Mammary epithelial cell (primary cell): ENCODE measurements at regions of chr2 and their contacts with region 1.

Region 1: GRCh38 chr2:162301151-162301804 is 17.2 kb downstream of the IFIH1 start:
- DNase-seq: peak; percentile 33
- H3K4me3 ChIP-seq: peak overlapping the region in 1 of 3 experiments; percentile 8
- H3K27ac ChIP-seq: no peak overlapping the region
- H3K4me1 ChIP-seq: no peaks in the 10 kb centered on the region
- H3K27me3 ChIP-seq: no peaks in the 10 kb centered on the region
- CTCF ChIP-seq: peak; percentile 72 to 89

Region 2: DNA sequence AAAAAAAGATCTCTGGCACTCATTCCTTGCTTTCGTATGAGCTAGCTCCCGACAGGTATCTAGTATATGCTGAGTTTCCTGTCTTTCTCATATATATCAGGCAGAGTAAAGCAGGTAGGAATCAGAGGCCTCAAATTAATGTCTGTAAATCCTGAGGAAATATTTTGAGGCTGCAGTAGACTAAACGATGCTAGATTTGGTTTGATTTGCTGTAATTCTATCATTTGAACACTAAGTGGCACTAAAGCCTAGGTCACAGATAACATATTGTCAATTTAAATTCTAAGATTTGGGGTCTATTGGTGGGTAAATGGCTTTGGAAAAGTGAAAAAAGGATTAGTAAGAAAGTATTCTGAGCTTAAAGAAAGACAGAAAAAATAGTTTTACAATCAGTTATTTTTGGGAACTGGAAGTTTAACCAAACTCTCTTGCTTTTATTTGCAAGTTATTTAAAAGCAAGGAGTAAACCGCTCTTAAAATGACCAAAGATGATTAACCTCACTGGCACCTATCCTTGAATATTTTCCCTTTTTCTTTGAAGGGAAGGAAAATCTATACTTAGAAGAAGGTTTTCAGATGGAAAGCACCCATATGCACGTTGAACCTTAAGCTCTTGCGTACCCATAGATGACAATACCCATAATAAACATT is 714.6 kb before region 1 on chr2:
- CTCF ChIA-PET with region 1: no interaction called
- dilution Hi-C with region 1: no loop called
- in situ Hi-C with region 1: no loop called
- intact Hi-C with region 1: loop called (anchors 10 kb)
- DNase-seq: no peak
- H3K4me3 ChIP-seq: no peak overlapping the region
- H3K27ac ChIP-seq: no peak overlapping the region
- H3K4me1 ChIP-seq: no peaks in the 10 kb centered on the region
- H3K27me3 ChIP-seq: no peaks in the 10 kb centered on the region
- CTCF ChIP-seq: peak; percentile 68 to 73

Region 3: GRCh38 chr2:162007447-162008040 is 293.7 kb before region 1 on chr2:
- CTCF ChIA-PET with region 1: no interaction called
- dilution Hi-C with region 1: no loop called
- in situ Hi-C with region 1: no loop called
- intact Hi-C with region 1: loop called (anchors 10 kb)
- DNase-seq: no peak
- H3K4me3 ChIP-seq: no peak overlapping the region
- H3K27ac ChIP-seq: no peak overlapping the region
- H3K4me1 ChIP-seq: peaks cover 4% of the 10 kb centered on the region
- H3K27me3 ChIP-seq: no peaks in the 10 kb centered on the region
- CTCF ChIP-seq: peak; percentile 52 to 61

Region 4: DNA sequence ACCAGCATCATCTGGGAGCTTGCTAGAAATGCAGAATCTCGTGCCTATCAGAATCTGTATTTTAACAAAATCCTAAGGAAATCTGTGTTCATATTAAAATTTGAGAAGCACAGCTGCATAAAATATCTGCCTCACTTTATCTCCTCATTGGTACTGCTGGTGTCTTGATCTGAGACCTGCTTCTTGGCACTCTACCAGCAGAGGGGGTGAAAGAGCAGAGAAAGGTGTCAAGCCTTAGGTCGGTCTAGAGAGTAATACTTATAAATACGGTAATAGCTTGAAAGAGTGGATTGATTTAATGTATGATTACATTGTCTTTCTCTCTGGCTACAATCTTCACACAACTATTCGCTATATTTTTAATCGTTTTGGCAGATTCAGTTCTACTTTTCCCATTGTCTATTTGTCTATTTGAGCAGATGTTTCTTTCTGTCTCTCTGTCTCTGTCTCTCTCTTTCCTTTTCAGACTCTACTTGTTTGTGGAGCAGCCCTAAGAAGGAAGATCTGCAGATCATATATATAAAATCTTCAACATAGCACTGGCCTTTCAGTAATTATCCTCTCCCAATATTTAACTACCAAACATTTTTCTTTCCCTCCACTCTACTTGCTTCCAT is 147.6 kb before region 1 on chr2:
- CTCF ChIA-PET with region 1: interaction called, 6 read pairs
- dilution Hi-C with region 1: no loop called
- in situ Hi-C with region 1: loop called in 1 of 2 experiments (anchors 5 kb)
- intact Hi-C with region 1: loop called (anchors 1 kb)
- DNase-seq: peak; percentile 58
- H3K4me3 ChIP-seq: no peak overlapping the region
- H3K27ac ChIP-seq: no peak overlapping the region
- H3K4me1 ChIP-seq: no peaks in the 10 kb centered on the region
- H3K27me3 ChIP-seq: no peaks in the 10 kb centered on the region
- CTCF ChIP-seq: peak; percentile 80 to 87

Region 5: GRCh38 chr2:162221064-162221463 is 80.2 kb before region 1 on chr2:
- CTCF ChIA-PET with region 1: interaction called, 13 read pairs
- dilution Hi-C with region 1: loop called (anchors 5 kb)
- in situ Hi-C with region 1: loop called (anchors 5 kb)
- intact Hi-C with region 1: loop called (anchors 1 kb)
- DNase-seq: peak; percentile 37
- H3K4me3 ChIP-seq: no peak overlapping the region
- H3K27ac ChIP-seq: no peak overlapping the region
- H3K4me1 ChIP-seq: no peaks in the 10 kb centered on the region
- H3K27me3 ChIP-seq: no peaks in the 10 kb centered on the region
- CTCF ChIP-seq: peak; percentile 96 to 99

Region 6: GRCh38 chr2:162244541-162245031 is 56.7 kb before region 1 on chr2:
- CTCF ChIA-PET with region 1: interaction called, 10 read pairs
- dilution Hi-C with region 1: no loop called
- in situ Hi-C with region 1: no loop called
- intact Hi-C with region 1: loop called (anchors 1 kb)
- DNase-seq: peak; percentile 95
- H3K4me3 ChIP-seq: peak overlapping the region; percentile 2 to 75 (median 62)
- H3K27ac ChIP-seq: peak overlapping the region; percentile 90
- H3K4me1 ChIP-seq: peaks cover 39% of the 10 kb centered on the region
- H3K27me3 ChIP-seq: no peaks in the 10 kb centered on the region
- CTCF ChIP-seq: no peak

Region 7: GRCh38 chr2:162261032-162261945 is 40.0 kb before region 1 on chr2:
- CTCF ChIA-PET with region 1: no interaction called
- dilution Hi-C with region 1: no loop called
- in situ Hi-C with region 1: no loop called
- intact Hi-C with region 1: loop called (anchors 2 kb)
- DNase-seq: peak; percentile 74
- H3K4me3 ChIP-seq: peak overlapping the region in 1 of 3 experiments; percentile 29
- H3K27ac ChIP-seq: peak overlapping the region; percentile 77
- H3K4me1 ChIP-seq: peaks cover 26% of the 10 kb centered on the region
- H3K27me3 ChIP-seq: no peaks in the 10 kb centered on the region
- CTCF ChIP-seq: no peak